Tibial artery (tissue), 4 donors: ENCODE measurements at regions of chr16 and their contacts with region 1.

Region 1: DNA sequence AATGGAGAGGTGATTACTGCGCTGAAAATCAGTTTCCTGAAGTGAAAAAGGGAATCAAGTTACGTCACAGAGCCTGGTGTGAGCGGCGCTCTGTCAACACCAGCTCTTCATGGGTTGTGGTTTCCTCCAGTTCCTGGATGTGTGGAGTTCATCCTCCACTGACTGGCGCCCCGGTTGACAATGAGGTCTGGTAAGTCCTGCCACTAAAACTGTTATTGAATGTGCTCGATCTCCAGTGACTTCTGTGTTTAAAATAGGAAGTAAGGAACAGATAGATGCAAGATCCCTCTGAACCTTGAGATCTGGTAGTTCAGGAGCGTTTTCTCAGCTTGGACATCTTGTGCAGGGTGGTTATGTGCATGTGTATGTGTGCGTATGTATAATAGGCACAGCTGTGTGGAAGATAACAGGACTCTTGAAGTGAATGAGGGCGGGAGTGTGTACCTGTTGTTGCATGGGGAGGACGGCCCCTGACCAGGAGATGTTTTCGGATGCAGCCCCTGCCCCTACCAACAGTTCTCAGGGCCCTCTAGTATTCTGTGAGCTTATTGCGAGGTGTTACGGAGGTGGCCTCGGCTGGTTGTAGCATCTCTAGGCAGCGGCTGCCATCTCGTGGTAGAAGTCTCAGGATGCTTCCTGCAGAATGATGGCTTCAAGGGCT is 22.0 kb upstream of the GOT2 start:
- DNase-seq: peak; percentile 58 to 74
- H3K4me3 ChIP-seq: no peak overlapping the region
- H3K27ac ChIP-seq: no peak overlapping the region
- H3K4me1 ChIP-seq: peaks cover 0 to 3% (median 0%) of the 10 kb centered on the region in 4 donors
- H3K27me3 ChIP-seq: peaks cover 0 to 2% of the 10 kb centered on the region in 2 donors
- CTCF ChIP-seq: peak; percentile 55 to 56

Region 2: DNA sequence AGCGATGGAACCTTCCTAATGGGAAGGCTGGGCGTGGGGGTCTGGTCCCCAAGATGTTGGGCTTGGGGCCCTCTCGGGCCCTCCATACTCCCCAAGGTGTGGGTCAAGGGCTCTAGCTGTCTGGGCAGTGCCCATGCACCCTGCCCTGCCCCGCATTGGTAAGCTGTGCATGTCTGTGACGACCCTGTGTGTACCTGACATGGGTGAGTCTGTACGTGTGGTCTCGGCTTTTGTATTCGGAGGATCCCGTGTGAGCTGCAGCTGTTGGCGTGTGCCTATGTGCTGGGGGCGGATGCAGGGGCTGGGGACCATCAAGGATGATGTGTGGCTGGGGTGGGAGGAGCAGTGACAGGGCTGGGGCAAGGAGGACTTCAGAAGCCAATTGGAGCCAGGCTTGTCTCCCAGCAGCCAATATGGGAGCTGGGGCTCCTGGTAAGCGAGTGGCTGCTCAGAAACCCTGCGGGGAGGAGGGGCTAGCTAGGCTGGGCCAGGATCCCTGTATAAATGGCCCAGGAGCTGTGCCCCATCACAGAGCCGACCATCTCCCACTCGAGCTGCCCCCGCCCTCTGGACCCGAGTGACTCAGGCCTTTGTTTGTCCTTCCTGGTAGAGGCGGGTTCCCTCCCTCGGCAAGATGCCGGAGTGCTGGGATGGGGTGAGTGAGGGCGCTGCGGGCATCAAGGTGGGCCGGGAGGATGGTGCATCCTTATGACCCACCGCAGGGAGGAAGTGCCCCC is 256.3 kb before region 1 on chr16 and contains the start of gene NDRG4:
- intact Hi-C with region 1: loop called (anchors 10 kb)
- DNase-seq: peak in 1 of 2 donors; percentile 64
- H3K4me3 ChIP-seq: peak within 1 kb of the TSS; percentile 11 to 16
- H3K27ac ChIP-seq: no peak within 1 kb of the TSS
- H3K4me1 ChIP-seq: peaks cover 0 to 26% (median 12%) of the 10 kb centered on the region in 4 donors
- H3K27me3 ChIP-seq: peaks cover 0 to 48% of the 10 kb centered on the region in 2 donors
- CTCF ChIP-seq: no peak

Region 3: GRCh38 chr16:58699151-58699550 is 57.0 kb before region 1 on chr16:
- intact Hi-C with region 1: no loop called
- DNase-seq: no peak
- H3K4me3 ChIP-seq: no peak overlapping the region
- H3K27ac ChIP-seq: no peak overlapping the region
- H3K4me1 ChIP-seq: peaks cover 0 to 2% (median 0%) of the 10 kb centered on the region in 4 donors
- H3K27me3 ChIP-seq: no peaks in the 10 kb centered on the region
- CTCF ChIP-seq: no peak

Region 4: DNA sequence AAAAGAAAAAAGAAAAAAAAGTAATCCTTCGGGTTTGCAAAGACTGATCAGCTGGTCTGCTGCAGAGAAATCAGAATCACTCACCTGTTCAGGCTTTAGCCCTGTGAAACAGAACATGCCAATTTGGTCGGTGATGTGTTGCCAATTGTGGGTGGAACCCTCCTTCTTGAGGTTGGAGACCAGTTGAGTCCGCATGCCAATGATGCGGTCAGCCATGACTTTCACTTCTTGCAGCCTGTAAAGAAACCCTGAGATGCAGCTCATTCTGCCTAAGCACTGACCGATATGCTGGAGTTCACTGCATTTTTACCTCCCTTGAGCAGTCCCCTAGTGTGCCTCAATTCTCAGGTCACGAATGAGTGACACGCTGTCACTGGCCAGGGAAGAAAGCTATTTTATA is 46.8 kb before region 1 on chr16:
- intact Hi-C with region 1: no loop called
- DNase-seq: no peak
- H3K4me3 ChIP-seq: no peak overlapping the region
- H3K27ac ChIP-seq: no peak overlapping the region
- H3K4me1 ChIP-seq: no peaks in the 10 kb centered on the region
- H3K27me3 ChIP-seq: no peaks in the 10 kb centered on the region
- CTCF ChIP-seq: no peak